GM12878 (cell line): ENCODE measurements at regions of chr9 and their contacts with region 1.

Region 1: GRCh38 chr9:23702311-23702922 is 123.6 kb downstream of the ELAVL2 start:
- DNase-seq: no peak
- ATAC-seq: no peak
- H3K4me3 ChIP-seq: no peak overlapping the region
- H3K27ac ChIP-seq: no peak overlapping the region
- H3K4me1 ChIP-seq: no peaks in the 10 kb centered on the region
- H3K27me3 ChIP-seq: no peaks in the 10 kb centered on the region
- CTCF ChIP-seq: no peak; a peak in 1 of 6 replicates
- EP300 ChIP-seq: no peak
- POLR2A ChIP-seq: no peak
- RAD21 ChIP-seq: no peak

Region 2: GRCh38 chr9:23412458-23412857 is 290.0 kb before region 1 on chr9:
- CTCF ChIA-PET with region 1: no interaction called
- POLR2A ChIA-PET with region 1: no interaction called
- RAD21 ChIA-PET with region 1: no interaction called
- SMC1A ChIA-PET with region 1: no interaction called
- in situ Hi-C with region 1: no loop called
- intact Hi-C with region 1: no loop called
- DNase-seq: no peak
- ATAC-seq: no peak
- H3K4me3 ChIP-seq: no peak overlapping the region
- H3K27ac ChIP-seq: no peak overlapping the region
- H3K4me1 ChIP-seq: no peaks in the 10 kb centered on the region
- H3K27me3 ChIP-seq: no peaks in the 10 kb centered on the region
- CTCF ChIP-seq: no peak
- EP300 ChIP-seq: no peak
- POLR2A ChIP-seq: no peak
- RAD21 ChIP-seq: no peak

Region 3: DNA sequence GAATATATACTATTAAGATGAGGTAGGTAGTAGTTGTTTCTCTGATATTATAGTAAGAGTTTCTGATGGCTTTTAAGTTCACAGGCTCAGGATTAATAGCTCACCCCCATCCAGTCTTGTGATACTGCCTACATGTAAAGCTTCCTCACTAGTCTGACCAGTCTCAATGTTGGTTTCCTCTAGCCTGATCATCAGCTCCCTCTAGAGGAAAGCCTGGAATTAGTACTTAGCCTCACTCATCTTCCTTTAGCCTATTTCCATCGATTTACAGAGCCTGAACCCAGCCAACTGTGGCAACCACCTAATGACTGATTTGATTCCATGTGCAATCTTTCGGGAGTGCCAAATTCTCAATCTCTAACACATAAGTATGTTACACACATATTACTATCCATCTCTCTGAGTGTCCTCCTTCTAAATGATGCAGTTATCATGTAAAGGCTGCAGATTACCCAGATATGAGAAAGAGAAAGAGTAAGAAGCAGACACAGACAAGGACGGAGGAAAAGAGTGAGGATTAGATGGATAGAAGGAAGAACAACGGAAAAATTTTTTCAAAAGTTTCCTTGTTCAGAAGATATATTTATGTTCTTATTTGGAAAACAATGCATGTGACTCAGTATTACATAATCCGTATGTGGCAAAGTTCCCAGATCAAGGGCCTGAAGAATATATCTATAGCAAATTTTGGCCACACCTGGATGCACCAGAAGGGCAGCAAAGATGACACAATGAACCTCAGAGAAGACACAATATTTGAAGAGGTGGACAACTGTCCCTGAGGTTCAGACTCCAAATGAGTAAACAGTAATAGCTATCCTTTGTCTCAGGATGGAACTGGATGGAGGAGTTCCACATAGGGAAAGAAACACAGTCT is 210.1 kb before region 1 on chr9:
- CTCF ChIA-PET with region 1: interaction called, 4 read pairs
- POLR2A ChIA-PET with region 1: no interaction called
- RAD21 ChIA-PET with region 1: interaction called, 10 read pairs
- SMC1A ChIA-PET with region 1: no interaction called
- in situ Hi-C with region 1: no loop called
- intact Hi-C with region 1: no loop called
- DNase-seq: no peak
- ATAC-seq: peak; percentile 92
- H3K4me3 ChIP-seq: no peak overlapping the region
- H3K27ac ChIP-seq: no peak overlapping the region
- H3K4me1 ChIP-seq: no peaks in the 10 kb centered on the region
- H3K27me3 ChIP-seq: no peaks in the 10 kb centered on the region
- CTCF ChIP-seq: peak; percentile 27 to 60 (median 59); a peak in 3 of 6 replicates
- EP300 ChIP-seq: no peak
- POLR2A ChIP-seq: no peak
- RAD21 ChIP-seq: peak; percentile 59

Region 4: DNA sequence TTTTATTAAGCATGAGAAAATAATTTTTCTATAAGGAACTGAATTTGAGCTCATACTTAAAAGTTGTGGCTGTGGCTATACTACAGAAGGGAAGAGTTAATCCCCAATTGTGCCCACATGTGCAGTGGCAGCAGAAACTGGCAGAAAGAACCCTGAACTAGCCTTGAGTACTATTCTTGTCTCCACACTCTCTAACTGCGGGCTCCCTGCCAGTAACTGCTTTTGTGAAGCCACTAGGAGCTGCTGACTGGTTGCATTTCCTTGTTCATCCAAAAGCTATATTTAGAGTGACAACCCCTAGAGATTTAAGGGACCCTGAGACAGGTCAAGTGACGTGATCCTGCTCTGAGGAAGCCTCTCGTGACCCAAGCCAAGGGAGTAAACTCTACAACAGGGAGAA is 115.0 kb before region 1 on chr9:
- CTCF ChIA-PET with region 1: interaction called, 10 read pairs
- POLR2A ChIA-PET with region 1: no interaction called
- RAD21 ChIA-PET with region 1: interaction called, 3 read pairs
- SMC1A ChIA-PET with region 1: no interaction called
- in situ Hi-C with region 1: no loop called
- intact Hi-C with region 1: no loop called
- DNase-seq: no peak
- ATAC-seq: peak; percentile 47
- H3K4me3 ChIP-seq: no peak overlapping the region
- H3K27ac ChIP-seq: no peak overlapping the region
- H3K4me1 ChIP-seq: no peaks in the 10 kb centered on the region
- H3K27me3 ChIP-seq: no peaks in the 10 kb centered on the region
- CTCF ChIP-seq: no peak
- EP300 ChIP-seq: no peak
- POLR2A ChIP-seq: no peak
- RAD21 ChIP-seq: no peak

Region 5: DNA sequence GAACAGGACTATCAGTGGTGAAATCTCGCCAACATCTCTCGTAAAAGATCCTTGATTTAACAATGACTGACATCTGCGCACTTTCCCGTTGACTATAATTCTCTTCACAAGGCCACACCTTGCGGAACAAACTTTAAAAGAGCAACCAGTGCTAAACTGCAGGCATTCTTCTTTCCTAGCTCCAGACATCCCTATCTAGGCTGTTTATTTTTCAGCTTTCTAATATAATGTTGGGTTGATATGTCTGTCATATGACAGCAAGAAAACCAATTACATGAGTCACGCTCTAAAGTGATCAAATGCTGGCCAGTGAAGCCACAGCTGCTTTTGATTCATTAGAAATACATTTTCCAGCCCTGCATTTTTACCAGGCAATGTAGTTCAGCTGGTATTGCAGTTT is 38.9 kb before region 1 on chr9:
- CTCF ChIA-PET with region 1: interaction called, 7 read pairs
- POLR2A ChIA-PET with region 1: no interaction called
- RAD21 ChIA-PET with region 1: no interaction called
- SMC1A ChIA-PET with region 1: interaction called, 10 read pairs
- in situ Hi-C with region 1: no loop called
- intact Hi-C with region 1: no loop called
- DNase-seq: no peak
- ATAC-seq: no peak
- H3K4me3 ChIP-seq: no peak overlapping the region
- H3K27ac ChIP-seq: no peak overlapping the region
- H3K4me1 ChIP-seq: no peaks in the 10 kb centered on the region
- H3K27me3 ChIP-seq: no peaks in the 10 kb centered on the region
- CTCF ChIP-seq: no peak
- EP300 ChIP-seq: no peak
- POLR2A ChIP-seq: no peak
- RAD21 ChIP-seq: no peak

Region 6: GRCh38 chr9:23686257-23686656 is 16.2 kb before region 1 on chr9:
- CTCF ChIA-PET with region 1: interaction called, 3 read pairs
- POLR2A ChIA-PET with region 1: interaction called, 3 read pairs
- RAD21 ChIA-PET with region 1: interaction called, 15 read pairs
- SMC1A ChIA-PET with region 1: interaction called, 21 read pairs
- in situ Hi-C with region 1: no loop called
- intact Hi-C with region 1: no loop called
- DNase-seq: no peak
- ATAC-seq: peak; percentile 76
- H3K4me3 ChIP-seq: no peak overlapping the region
- H3K27ac ChIP-seq: no peak overlapping the region
- H3K4me1 ChIP-seq: no peaks in the 10 kb centered on the region
- H3K27me3 ChIP-seq: no peaks in the 10 kb centered on the region
- CTCF ChIP-seq: no peak
- EP300 ChIP-seq: no peak
- POLR2A ChIP-seq: no peak
- RAD21 ChIP-seq: no peak

Region 7: DNA sequence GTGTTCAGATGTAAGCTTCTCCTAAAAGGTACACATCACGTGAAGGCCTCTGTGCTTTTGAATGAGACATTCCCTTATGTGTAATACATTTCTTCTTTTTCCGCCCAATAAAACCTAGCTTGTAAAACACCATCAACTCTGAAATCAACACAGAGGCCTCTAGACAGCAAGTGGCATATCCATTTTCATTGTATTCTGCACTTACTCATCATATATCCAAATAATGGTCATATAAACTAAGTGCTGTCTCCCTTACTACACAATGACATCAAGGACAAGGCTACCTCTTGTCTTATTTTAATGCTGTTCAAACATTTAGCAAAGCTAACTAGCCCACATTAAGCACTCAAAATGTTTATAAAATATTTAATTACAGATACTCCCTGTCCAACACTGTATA is 15.1 kb after region 1 on chr9:
- CTCF ChIA-PET with region 1: interaction called, 25 read pairs
- POLR2A ChIA-PET with region 1: no interaction called
- RAD21 ChIA-PET with region 1: interaction called, 4 read pairs
- SMC1A ChIA-PET with region 1: interaction called, 6 read pairs
- in situ Hi-C with region 1: no loop called
- intact Hi-C with region 1: no loop called
- DNase-seq: no peak
- ATAC-seq: no peak
- H3K4me3 ChIP-seq: no peak overlapping the region
- H3K27ac ChIP-seq: no peak overlapping the region
- H3K4me1 ChIP-seq: no peaks in the 10 kb centered on the region
- H3K27me3 ChIP-seq: no peaks in the 10 kb centered on the region
- CTCF ChIP-seq: no peak
- EP300 ChIP-seq: no peak
- POLR2A ChIP-seq: no peak
- RAD21 ChIP-seq: no peak